GM10248 (cell line): ENCODE measurements at regions of chr2 and their contacts with region 1.

Region 1: GRCh38 chr2:142682528-142682927 is 194.9 kb upstream of the KYNU start:
- DNase-seq: no peak
- CTCF ChIP-seq: no peak

Region 2: DNA sequence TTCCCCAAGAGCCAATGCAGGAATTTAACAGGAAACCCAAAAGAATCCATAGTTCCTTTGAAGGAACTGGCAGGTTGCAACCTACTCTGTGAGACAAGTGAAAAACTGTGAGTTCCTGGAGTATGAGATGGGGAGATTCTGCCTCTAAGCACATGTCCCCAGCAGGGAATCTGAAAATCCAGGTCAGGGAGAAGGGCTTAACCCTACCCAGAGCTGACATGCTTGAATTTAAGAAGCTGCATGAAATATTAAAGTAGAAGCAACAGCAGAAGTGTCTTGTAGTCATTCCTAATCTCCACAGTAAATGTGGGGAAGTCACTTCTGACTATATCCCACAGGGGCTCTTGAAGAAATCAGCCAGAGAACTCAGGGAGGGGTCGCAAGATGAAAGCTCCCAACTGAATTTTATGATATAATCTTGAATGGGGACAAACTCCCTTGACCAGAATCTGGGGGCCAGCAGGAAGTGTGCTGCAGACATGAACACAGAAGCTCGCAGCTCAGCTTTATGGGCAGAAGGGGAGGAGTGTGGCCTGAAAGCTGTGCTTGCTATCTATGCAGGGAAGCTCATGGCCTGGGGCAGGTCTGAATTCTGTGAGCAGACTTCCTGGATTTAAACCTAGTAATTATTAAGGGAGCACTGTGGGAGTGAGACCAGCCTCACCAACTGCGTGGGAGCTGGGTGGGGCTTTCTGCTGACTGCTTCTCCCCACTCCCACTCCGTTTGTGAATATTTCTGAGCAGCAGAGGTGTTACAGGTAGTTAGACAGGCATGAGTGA is 10.8 kb after region 1 on chr2:
- CTCF ChIA-PET with region 1: interaction called, 15 read pairs
- POLR2A ChIA-PET with region 1: no interaction called
- DNase-seq: no peak
- CTCF ChIP-seq: no peak

Region 3: DNA sequence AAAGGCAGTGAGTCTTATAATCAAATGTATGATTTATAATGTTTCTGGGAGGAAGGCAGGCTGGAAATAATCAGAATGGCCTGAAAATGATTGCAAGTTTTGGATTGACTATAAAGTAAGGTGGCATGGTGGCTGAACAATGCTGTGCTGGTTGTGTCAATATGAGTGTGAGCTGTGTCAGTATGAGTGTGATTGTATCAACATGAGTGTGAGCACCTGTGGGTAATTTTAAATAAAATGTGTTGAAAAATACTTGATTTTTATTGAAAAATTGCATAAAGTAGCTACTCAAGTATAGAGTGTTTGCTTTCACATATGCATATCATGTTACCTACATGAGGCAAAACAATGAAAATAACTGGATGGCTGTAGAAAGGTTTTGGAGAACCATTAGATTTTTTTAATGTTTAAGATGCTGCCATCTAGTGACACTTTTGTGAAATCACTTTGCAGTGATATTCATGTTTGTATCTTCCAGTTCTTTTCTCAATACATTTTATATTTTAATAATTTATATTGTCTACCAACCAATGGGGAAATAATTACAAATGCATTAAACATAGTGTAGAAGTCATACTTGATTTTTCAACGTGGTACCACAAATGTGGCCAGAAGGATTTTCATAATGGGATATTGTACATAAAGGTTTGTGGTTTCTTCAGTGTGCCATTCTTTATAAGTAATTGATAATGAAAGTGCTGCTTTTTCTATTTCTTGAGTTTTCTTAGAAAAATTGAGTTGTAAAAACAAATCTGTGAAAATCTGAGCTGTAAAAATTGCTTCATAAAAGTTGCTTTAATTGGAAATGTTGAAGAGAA is 298.2 kb after region 1 on chr2:
- CTCF ChIA-PET with region 1: interaction called, 34 read pairs
- POLR2A ChIA-PET with region 1: no interaction called
- DNase-seq: peak; percentile 17
- CTCF ChIP-seq: peak; percentile 24

Region 4: GRCh38 chr2:142989273-142990204 is 307.0 kb after region 1 on chr2:
- CTCF ChIA-PET with region 1: interaction called, 34 read pairs
- POLR2A ChIA-PET with region 1: no interaction called
- DNase-seq: peak; percentile 15
- CTCF ChIP-seq: peak; percentile 43